ENCODE measurements at regions of chr3 and their contacts with region 1.

Region 1: DNA sequence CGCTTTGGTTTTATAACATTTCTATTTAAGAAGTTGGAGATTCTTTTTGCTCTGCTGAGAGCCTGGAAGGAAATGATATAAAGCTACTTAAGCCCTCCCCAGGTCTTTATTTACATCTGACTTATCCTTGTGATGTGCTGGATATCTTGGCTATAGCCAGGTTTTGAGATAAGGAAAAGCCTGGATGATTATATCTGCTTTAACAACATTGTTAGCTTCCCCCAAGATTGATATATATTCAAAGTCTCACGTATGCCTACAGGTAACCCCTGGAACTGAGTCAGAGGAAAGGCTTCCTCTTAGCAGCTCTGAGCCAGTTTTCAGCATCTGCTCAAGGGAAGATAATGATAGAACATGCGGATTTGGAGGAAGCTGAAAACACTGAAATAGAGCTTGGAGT is 61.5 kb upstream of the CRBN start:
- DNase-seq: no peak
- ATAC-seq: no peak
- H3K4me3 ChIP-seq: no peak overlapping the region
- H3K27ac ChIP-seq: no peak overlapping the region
- H3K4me1 ChIP-seq: no peaks in the 10 kb centered on the region
- H3K27me3 ChIP-seq: no peaks in the 10 kb centered on the region; a peak in 1 of 4 replicates
- CTCF ChIP-seq: no peak
- EP300 ChIP-seq: no peak
- POLR2A ChIP-seq: no peak
- RAD21 ChIP-seq: no peak

Region 2: GRCh38 chr3:2921903-2922302 is 319.1 kb before region 1 on chr3:
- CTCF ChIA-PET with region 1: no interaction called
- POLR2A ChIA-PET with region 1: no interaction called
- RAD21 ChIA-PET with region 1: no interaction called
- SMC1A ChIA-PET with region 1: no interaction called
- in situ Hi-C with region 1: no loop called
- intact Hi-C with region 1: no loop called
- DNase-seq: peak; percentile 24
- ATAC-seq: peak; percentile 95
- H3K4me3 ChIP-seq: no peak overlapping the region
- H3K27ac ChIP-seq: no peak overlapping the region
- H3K4me1 ChIP-seq: peaks cover 5% of the 10 kb centered on the region; the same call in 1 of the 2 replicates
- H3K27me3 ChIP-seq: no peaks in the 10 kb centered on the region; a peak in 1 of 4 replicates
- CTCF ChIP-seq: peak; percentile 32 to 64 (median 45); a peak in 5 of 6 replicates
- EP300 ChIP-seq: no peak
- POLR2A ChIP-seq: no peak
- RAD21 ChIP-seq: peak; percentile 82

Region 3: DNA sequence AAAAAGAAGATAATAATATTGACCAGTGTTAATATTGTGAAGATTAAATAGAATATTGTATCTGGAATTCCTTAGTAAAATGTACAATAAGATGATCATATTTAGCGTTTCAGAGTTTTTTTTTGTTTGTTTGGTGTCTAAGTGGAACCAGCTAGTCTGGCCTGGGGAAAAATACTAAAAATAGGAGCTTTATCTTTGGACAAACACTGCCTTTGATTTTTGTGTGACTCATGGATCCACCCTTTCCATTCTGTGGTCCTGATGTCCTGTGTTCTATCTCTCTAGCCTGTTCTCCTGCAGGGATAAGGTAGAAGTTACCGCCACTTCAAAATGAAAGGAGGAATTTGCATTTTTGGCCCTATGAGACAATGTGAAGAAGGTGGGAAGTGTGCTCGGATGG is 18.2 kb after region 1 on chr3:
- CTCF ChIA-PET with region 1: no interaction called
- POLR2A ChIA-PET with region 1: no interaction called
- RAD21 ChIA-PET with region 1: interaction called, 13 read pairs
- SMC1A ChIA-PET with region 1: interaction called, 3 read pairs
- in situ Hi-C with region 1: no loop called
- intact Hi-C with region 1: no loop called
- DNase-seq: no peak
- ATAC-seq: no peak
- H3K4me3 ChIP-seq: no peak overlapping the region
- H3K27ac ChIP-seq: no peak overlapping the region
- H3K4me1 ChIP-seq: no peaks in the 10 kb centered on the region
- H3K27me3 ChIP-seq: no peaks in the 10 kb centered on the region
- CTCF ChIP-seq: no peak
- EP300 ChIP-seq: no peak
- POLR2A ChIP-seq: no peak
- RAD21 ChIP-seq: no peak

Region 4: GRCh38 chr3:3273810-3274209 is 32.8 kb after region 1 on chr3:
- CTCF ChIA-PET with region 1: no interaction called
- POLR2A ChIA-PET with region 1: no interaction called
- RAD21 ChIA-PET with region 1: no interaction called
- SMC1A ChIA-PET with region 1: no interaction called
- in situ Hi-C with region 1: no loop called
- intact Hi-C with region 1: no loop called
- DNase-seq: no peak
- ATAC-seq: no peak
- H3K4me3 ChIP-seq: no peak overlapping the region
- H3K27ac ChIP-seq: no peak overlapping the region
- H3K4me1 ChIP-seq: no peaks in the 10 kb centered on the region
- H3K27me3 ChIP-seq: no peaks in the 10 kb centered on the region
- CTCF ChIP-seq: no peak
- EP300 ChIP-seq: no peak
- POLR2A ChIP-seq: no peak
- RAD21 ChIP-seq: no peak

Measured in GM12878 (cell line).